Right ventricle myocardium inferior (tissue), 1 donor: ENCODE measurements at regions of chr9 and their contacts with region 1.

Region 1: DNA sequence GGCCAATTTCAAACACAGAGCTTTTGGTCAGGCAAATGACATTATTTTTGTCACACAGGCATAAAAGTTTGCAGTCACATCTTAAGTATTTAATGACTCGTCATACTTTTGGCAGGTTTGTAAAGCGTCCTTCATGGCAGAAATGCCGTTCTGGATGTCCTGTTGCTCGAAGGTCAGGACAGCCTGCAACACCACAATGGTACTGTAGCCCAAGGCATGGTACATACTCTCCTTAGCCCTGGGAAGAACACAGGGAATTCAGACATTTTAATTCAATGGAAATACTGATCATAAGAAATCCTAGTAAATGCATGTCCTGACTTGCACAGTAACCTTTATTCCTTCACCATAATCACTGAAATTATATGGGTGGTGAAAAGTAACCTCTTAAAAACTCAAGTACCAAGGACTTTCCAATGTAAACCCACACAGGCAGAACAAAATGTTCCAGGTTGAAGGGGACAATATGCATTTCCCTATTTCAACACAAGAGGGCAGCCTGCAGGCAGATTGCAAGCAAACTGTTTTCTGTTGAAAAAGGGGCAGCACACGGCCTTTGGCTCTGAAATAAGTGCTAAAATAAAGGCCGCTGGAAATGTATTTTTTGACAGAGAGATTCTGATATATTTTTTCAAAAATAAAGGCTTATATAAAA is 95.7 kb downstream of the TTC39B start:
- DNase-seq: no peak
- ATAC-seq: peak; percentile 48

Region 2: DNA sequence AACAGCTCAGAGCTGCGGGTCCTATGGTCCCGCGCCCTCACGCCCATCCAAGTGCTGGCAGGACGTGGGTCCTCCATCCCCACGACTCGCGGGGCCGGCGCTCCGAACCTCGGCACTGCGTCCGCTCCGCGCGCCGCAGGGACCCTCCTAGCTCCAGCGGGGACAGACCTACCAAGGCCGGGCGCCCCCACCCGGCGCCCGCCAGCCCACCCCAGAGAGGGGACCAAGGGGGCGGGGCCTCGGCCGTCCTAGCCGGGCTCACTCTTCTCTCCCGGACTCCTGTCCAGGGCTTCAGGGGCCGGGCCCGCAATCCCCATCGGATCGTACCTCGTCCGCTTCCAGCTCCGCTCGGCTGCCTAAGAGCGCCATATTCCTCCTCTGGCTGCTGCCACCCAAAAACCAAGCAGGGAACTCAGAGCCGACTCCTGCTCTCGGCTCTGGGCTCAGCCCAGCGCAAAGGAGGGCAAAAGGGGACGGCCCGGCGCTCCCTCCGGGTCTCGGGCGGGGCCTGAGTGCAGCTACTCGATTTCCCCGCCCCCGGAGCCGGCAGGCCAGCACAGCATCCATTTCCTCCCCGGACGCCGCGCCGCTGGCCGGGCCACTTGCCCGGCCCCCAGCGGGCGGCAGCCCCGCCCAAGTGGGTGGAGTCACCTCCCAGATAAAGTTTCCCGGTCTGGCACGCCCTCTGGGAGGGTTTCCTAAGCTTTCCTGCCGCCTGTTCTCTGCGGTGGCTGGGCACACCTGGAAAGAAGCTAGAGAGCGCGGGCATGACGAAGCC is 95.7 kb after region 1 on chr9 and contains the start of gene TTC39B:
- intact Hi-C with region 1: loop called (anchors 5 kb)
- DNase-seq: peak; percentile 97
- ATAC-seq: peak; percentile 99
- total RNA-seq, gene TTC39B: 1.9 TPM